WTC11 (cell line): ENCODE measurements at regions of chr6 and their contacts with region 1.

Region 1: DNA sequence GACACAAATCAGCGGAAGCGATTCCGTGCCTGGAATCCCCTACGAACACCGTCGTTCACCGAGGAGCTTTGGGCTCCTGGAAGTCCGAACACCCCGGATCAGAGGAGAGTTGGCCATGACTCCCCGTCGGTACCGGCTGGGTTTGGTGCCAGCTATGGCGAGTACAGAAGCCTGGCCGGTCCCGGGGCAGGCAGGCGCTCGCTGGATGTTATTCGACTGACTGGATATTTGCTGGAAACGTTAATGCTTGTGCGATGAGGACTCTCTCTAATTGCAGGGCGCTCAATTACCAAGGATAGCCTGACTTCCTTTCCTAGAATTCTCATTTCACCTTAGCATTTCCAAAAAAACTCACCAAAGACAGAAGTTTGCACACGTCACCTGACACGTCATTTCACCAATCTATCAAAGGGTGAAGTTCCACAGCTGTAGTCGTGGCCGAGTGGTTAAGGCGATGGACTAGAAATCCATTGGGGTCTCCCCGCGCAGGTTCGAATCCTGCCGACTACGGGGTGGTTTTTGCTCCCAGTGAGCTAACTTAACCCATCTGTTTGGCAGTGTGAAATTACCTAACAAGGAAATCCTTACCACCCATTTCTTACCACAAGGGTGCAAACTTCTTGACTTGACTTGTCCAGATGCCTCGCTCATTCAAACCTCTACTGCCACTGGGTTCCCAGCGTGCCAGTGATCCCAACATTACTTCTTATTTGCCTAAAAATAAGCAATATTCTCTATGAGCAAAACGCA is 22.7 kb upstream of the ZNF184 start:
- DNase-seq: peak; percentile 89
- ATAC-seq: peak; percentile 89
- H3K4me3 Mint-ChIP-seq: peak overlapping the region; percentile 91
- H3K27ac Mint-ChIP-seq: peak overlapping the region; percentile 30; the same call in 1 of the 2 replicates
- H3K4me1 Mint-ChIP-seq: peaks cover 10% of the 10 kb centered on the region
- H3K27me3 Mint-ChIP-seq: peaks cover 14% of the 10 kb centered on the region
- CTCF ChIP-seq: no peak

Region 2: DNA sequence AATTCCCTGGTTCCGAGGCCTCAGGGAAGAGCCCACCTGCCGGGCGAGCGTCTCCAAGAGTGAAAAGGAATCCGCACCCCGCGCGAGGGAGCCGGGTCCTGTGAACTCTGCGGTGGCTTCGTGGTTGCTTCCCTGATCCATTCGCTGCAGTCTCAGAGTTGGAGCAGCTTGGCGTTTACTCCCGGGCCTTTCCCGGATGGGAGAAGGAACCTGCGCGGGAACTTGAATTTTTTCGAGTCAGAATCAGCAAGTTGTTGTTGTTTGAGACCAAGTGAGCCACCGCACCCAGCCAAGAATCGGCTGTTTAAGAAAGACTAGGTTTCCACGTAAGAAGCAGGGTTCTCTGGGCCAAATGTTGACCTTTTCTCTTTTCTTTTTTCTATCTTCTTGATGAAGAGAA is 235.2 kb before region 1 on chr6:
- CTCF ChIA-PET with region 1: interaction called, 10 read pairs
- POLR2A ChIA-PET with region 1: no interaction called
- DNase-seq: peak; percentile 57
- ATAC-seq: peak; percentile 71
- H3K4me3 Mint-ChIP-seq: peak overlapping the region; percentile 86
- H3K27ac Mint-ChIP-seq: peak overlapping the region; percentile 79
- H3K4me1 Mint-ChIP-seq: peaks cover 7% of the 10 kb centered on the region
- H3K27me3 Mint-ChIP-seq: peaks cover 29% of the 10 kb centered on the region
- CTCF ChIP-seq: no peak

Region 3: DNA sequence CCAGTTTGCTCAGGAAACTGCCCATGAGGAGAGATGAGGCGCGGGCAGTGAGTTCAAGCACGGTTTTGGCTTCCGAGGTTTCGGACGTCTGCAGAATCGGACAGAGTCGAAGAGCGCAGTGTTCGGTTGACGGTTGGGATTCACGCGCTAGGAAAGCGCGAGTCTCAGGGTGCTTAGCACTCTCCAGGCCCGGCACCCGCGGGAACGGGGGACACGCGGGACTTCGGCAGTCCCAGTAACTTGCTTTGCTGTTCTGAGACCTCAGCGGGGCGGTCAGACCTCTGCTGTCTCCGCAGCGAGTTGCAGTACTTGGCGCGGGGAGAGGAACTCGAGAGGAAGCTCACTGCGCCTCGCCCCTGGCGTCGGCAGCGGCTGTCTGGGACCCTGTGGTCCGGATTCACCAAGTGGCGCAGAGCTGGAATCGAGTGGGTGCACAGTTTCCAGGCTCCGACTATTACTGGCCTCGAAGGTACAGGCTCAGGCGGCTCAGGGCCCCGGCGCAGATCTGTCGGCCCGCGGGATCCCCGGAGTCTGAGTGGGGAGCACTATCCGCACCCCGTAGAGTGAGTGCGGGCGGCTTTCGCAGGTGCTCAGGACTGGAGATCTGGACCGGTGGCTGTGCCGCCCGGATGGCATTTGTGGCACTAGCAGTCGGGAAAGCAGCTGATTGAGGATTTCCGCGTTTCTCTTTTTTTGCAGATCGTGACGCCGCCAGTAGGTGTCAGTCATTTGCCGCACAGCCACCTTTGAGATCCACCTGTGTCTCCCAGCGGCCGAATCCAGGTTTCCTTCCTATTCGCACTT is 183.2 kb before region 1 on chr6 and contains the start of gene POM121L2:
- CTCF ChIA-PET with region 1: interaction called, 11 read pairs
- POLR2A ChIA-PET with region 1: no interaction called
- DNase-seq: peak; percentile 84
- ATAC-seq: peak; percentile 71
- H3K4me3 Mint-ChIP-seq: peak within 1 kb of the TSS; percentile 91
- H3K27ac Mint-ChIP-seq: no peak within 1 kb of the TSS
- H3K4me1 Mint-ChIP-seq: peaks cover 8% of the 10 kb centered on the region
- H3K27me3 Mint-ChIP-seq: peaks cover 65% of the 10 kb centered on the region
- CTCF ChIP-seq: peak; percentile 66
- total RNA-seq, gene POM121L2: 0.13 to 0.16 TPM in 2 of 3 replicates, not detected in the other

Region 4: GRCh38 chr6:27472617-27473400 is 22.8 kb before region 1 on chr6 and contains the start of gene ZNF184:
- CTCF ChIA-PET with region 1: interaction called, 10 read pairs
- POLR2A ChIA-PET with region 1: no interaction called
- DNase-seq: peak; percentile 96
- ATAC-seq: peak; percentile 96
- H3K4me3 Mint-ChIP-seq: peak within 1 kb of the TSS; percentile 88
- H3K27ac Mint-ChIP-seq: peak within 1 kb of the TSS; percentile 96
- H3K4me1 Mint-ChIP-seq: peaks cover 31% of the 10 kb centered on the region
- H3K27me3 Mint-ChIP-seq: no peaks in the 10 kb centered on the region
- CTCF ChIP-seq: no peak
- total RNA-seq, gene ZNF184: 6.7 to 7.1 TPM (median 7.0 TPM) in 3 replicates

Region 5: DNA sequence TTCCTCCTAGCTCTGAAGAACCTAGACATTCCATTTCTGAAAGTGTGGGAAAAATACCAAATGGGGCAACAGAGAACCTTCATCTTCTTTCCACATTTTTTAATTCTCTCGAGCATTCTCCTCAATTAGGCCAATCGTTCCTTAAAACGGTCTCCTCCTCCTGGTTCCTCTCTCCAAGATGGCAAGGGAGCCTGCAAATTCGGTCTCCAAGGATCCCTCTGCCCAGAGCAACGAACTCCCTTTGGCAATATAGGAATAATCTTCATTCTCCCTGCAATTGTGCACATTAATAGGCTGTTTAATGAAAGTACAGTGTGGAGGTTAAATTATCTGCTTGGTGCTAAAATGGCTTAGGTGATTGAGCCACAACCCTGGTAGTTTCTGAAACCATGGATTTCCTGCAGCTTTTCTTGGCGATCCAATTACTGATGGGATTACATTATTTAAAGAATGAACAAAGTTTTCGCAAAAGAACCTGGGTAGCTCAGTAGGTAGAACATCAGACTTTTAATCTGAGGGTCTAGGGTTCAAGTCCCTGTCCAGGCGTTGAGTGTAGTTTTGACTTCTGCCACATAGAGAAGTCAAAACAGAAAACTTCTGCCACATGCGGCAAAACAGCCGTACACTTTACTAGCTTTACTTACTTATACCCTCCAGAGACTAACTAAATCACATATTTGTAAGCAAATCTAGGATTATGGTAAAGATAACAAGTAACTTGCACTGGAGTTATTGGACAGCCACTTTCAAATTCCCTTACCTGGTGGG is 80.2 kb after region 1 on chr6:
- CTCF ChIA-PET with region 1: no interaction called
- POLR2A ChIA-PET with region 1: no interaction called
- DNase-seq: no peak
- ATAC-seq: peak; percentile 88
- H3K4me3 Mint-ChIP-seq: peak overlapping the region; percentile 61
- H3K27ac Mint-ChIP-seq: no peak overlapping the region
- H3K4me1 Mint-ChIP-seq: peaks cover 7% of the 10 kb centered on the region
- H3K27me3 Mint-ChIP-seq: peaks cover 13% of the 10 kb centered on the region; the same call in 1 of the 2 replicates
- CTCF ChIP-seq: no peak